Head of caudate nucleus (tissue), 42 donors: ENCODE measurements at regions of chr4 and their contacts with region 1.

Region 1: GRCh38 chr4:6716018-6716911 is at the start of gene BLOC1S4:
- DNase-seq: peak; percentile 73 to 94 (median 88)

Region 2: GRCh38 chr4:6595897-6596537 is 120.2 kb before region 1 on chr4:
- intact Hi-C with region 1: no loop called
- DNase-seq: no peak

Region 3: GRCh38 chr4:6873792-6874461 is 157.7 kb after region 1 on chr4:
- intact Hi-C with region 1: loop called (anchors 5 kb)
- DNase-seq: peak; percentile 51 to 92 (median 82)

Region 4: GRCh38 chr4:6885951-6886557 is 169.8 kb after region 1 on chr4:
- intact Hi-C with region 1: loop called (anchors 5 kb)
- DNase-seq: peak in 41 of 42 donors; percentile 59 to 91 (median 79)

Region 5: DNA sequence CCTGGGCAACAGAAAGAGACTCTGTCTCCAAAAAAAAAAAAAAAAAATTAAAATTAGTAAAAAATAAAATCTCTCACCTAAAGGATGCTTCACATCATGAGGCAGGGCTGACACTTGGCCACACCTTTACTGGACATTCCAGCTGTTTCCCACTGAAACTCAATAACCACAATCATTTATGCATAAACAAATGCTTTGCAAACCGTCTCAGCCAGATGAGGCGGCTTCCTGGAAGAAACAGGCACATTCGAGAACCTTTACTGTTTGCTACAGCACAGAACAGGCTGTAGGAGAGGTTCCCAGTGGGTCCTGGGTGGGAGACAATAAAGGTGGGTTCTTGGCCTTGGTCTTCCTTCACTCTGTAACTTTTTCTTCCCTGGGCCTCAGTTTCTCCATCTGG is 182.5 kb after region 1 on chr4:
- intact Hi-C with region 1: no loop called
- DNase-seq: no peak

Region 6: GRCh38 chr4:7067452-7068278 is 351.4 kb after region 1 on chr4 and contains the start of gene GRPEL1:
- intact Hi-C with region 1: loop called (anchors 5 kb)
- DNase-seq: peak in 39 of 42 donors; percentile 33 to 100 (median 99)